WTC11 (cell line): ENCODE measurements at regions of chr12 and their contacts with region 1.

Region 1: GRCh38 chr12:108201808-108202207 is 72.7 kb downstream of the WSCD2 start:
- DNase-seq: no peak
- ATAC-seq: no peak
- H3K4me3 Mint-ChIP-seq: no peak overlapping the region
- H3K27ac Mint-ChIP-seq: no peak overlapping the region
- H3K4me1 Mint-ChIP-seq: no peaks in the 10 kb centered on the region
- H3K27me3 Mint-ChIP-seq: no peaks in the 10 kb centered on the region; the same call in 1 of the 2 replicates
- CTCF ChIP-seq: no peak

Region 2: GRCh38 chr12:108063192-108063591 is 138.6 kb before region 1 on chr12:
- CTCF ChIA-PET with region 1: no interaction called
- POLR2A ChIA-PET with region 1: interaction called, 10 read pairs
- DNase-seq: no peak
- ATAC-seq: peak; percentile 53
- H3K4me3 Mint-ChIP-seq: no peak overlapping the region
- H3K27ac Mint-ChIP-seq: no peak overlapping the region
- H3K4me1 Mint-ChIP-seq: no peaks in the 10 kb centered on the region
- H3K27me3 Mint-ChIP-seq: no peaks in the 10 kb centered on the region
- CTCF ChIP-seq: peak; percentile 84